ENCODE measurements at regions of chr2 and their contacts with region 1.

Region 1: DNA sequence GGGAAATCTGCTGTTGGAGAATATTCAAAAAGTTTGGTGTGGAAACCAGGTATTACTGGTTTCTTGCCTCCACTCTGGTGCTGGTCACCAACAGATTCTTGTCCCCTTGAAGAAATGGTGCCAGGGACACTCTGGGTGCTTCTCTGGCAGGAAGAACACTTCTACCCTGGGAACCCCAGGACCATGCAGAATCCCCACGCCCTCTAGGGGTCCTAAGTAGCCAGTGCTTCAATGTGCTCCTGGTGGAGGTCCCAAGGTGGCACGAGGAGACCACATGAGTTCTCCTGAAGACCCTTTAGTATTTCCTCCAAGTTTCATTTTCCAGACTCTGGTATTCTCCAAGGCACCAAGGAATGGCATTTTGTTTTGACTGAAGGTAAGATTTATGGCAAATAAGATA is 380.6 kb downstream of the TSN start:
- ATAC-seq: peak in 2 of 8 experiments; percentile 15 to 83
- H3K4me3 ChIP-seq: no peak overlapping the region
- H3K27ac ChIP-seq: no peak overlapping the region
- H3K4me1 ChIP-seq: no peaks in the 10 kb centered on the region

Region 2: GRCh38 chr2:121558329-121558728 is 577.7 kb before region 1 on chr2:
- in situ Hi-C with region 1: no loop called
- ATAC-seq: no peak
- H3K4me3 ChIP-seq: no peak overlapping the region
- H3K27ac ChIP-seq: no peak overlapping the region
- H3K4me1 ChIP-seq: peaks cover 6 to 15% of the 10 kb centered on the region in 2 donors

Region 3: DNA sequence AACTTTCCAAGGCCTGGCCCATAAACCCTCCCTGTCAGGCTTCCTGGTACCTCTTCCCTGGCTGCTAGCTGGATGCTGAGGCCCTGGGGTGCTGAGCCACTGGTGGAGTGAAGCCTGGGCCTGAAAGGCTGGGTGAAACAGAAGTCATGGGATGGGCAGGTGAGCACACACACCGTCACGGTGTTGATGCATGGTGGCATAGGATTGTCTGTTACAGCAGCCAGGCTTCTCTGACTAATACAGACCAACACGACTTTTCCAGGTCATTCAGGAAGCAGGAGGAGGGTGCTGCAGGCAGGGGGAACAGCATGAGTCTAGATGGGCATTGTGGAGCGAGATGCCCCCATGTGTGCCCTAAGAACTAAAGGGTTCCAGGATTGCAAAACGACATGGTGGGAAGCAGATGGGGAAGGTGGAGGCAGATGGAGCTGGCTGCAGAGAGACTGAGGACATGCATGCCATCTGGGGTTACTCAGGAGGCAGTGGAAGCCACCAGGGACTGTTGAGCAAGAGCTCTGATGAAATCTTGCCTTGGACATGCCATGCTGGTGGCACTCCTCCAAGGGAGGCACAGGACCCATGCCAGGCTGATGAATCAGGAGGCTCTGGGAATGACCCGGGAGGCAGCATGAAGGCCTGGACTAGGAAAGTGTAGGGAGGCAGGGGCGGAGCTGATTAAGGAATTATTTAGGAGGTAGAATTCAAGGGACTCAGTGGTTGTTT is 100.3 kb after region 1 on chr2:
- in situ Hi-C with region 1: loop called in 1 of 9 experiments (anchors 25 kb)
- ATAC-seq: peak in 2 of 8 experiments; percentile 9 to 60
- H3K4me3 ChIP-seq: no peak overlapping the region
- H3K27ac ChIP-seq: no peak overlapping the region
- H3K4me1 ChIP-seq: peaks cover 17 to 20% of the 10 kb centered on the region in 2 donors

Region 4: DNA sequence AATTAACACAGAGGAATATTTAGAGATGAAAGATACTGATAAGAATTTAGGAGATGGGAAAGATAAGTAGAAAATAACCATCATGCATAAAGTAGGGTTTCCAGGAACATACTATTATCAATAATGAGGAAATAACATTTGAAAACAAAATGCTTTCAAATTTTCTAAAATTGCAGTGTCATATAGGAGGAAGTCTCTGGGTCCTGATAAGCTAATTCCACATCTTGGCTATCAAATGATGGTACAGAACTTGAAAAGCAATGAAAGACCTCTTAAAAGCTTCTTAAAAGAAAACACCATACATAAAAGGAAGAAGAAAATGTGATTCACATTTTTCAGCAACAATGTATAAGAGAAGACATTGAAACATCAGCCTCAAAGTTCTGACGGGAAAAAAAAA is 644.2 kb after region 1 on chr2:
- in situ Hi-C with region 1: no loop called
- ATAC-seq: no peak
- H3K4me3 ChIP-seq: no peak overlapping the region
- H3K27ac ChIP-seq: no peak overlapping the region
- H3K4me1 ChIP-seq: no peaks in the 10 kb centered on the region